Common myeloid progenitor, CD34-positive (primary cell): ENCODE measurements at regions of chr6 and their contacts with region 1.

Region 1: GRCh38 chr6:157079771-157080170 is 243.5 kb downstream of the TMEM242 start:
- DNase-seq: peak in 2 of 3 donors; percentile 55 to 62
- H3K4me3 ChIP-seq: no peak overlapping the region
- H3K27ac ChIP-seq: peak overlapping the region; percentile 17 to 58
- H3K4me1 ChIP-seq: peaks cover 11 to 30% (median 14%) of the 10 kb centered on the region in 4 experiments
- H3K27me3 ChIP-seq: no peaks in the 10 kb centered on the region

Region 2: DNA sequence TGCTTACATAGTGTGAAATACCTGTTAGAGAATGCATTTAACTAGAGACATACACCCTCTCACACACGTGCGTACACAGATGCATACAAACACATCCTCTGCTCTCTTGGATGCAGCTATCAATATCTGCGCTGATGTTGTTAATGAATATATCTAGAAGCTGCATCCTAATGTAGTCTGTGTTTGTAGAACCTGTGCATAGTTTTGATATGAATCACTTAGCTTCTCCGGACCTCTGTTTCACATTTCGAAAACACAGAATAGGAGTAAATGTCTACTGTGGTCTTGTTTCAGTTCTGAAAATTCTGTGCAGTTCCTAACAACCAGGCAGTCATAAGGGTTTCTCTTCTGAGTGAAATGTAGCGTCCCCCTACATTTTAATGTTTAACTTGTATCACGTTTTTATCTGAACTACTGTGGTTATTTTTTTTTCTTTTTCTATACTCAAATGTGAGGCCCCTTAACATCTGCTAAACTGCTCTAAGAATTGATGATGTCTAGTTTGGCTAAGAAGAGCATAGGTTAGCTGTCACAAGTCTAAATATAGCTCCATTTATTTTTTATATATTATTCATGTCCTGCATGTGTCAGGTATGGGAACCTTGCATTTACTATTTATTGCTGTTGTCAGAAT is 11.0 kb before region 1 on chr6:
- CTCF ChIA-PET with region 1: interaction called, 11 read pairs
- POLR2A ChIA-PET with region 1: no interaction called
- DNase-seq: no peak
- H3K4me3 ChIP-seq: no peak overlapping the region
- H3K27ac ChIP-seq: no peak overlapping the region
- H3K4me1 ChIP-seq: peaks cover 26 to 56% (median 39%) of the 10 kb centered on the region in 4 experiments
- H3K27me3 ChIP-seq: no peaks in the 10 kb centered on the region

Region 3: DNA sequence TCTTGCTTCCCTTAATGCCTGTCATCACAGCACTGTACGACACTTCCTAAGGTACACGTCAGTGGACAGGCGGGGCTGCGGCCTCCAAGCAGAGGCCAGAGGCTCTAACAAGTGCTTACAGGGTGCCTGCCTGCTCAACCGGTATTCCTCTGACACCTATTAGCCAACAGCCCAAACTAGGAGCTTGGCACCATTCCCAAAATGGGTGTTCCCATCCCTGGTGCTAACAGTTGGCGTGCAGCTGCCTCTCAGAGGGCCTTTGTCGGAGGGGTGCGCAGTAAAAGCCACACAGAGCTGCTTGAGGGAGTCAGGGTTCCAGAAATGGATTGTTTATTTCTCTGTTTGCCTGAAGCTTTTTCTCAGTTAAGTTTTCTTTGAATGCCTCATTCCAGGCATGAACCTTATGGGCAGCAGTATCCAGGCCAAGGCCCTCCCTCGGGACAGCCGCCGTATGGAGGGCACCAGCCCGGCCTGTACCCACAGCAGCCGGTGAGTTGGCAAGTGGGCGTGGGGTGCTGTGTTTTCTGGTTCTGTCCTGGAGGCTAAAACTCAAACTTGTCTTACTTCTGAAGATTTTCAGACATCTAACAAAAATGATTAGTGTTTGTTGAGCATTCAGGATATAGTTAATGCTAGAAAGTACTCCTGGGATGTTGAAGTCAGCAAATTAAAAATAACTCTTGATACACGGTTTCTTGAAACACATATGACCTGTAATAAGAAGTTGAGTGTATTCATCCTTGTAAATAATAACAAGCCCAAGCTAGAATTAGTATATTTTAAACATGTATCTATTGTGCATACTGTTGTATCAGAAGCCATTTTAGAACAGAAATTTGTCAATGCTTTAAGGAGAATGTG is 118.9 kb after region 1 on chr6:
- CTCF ChIA-PET with region 1: no interaction called
- POLR2A ChIA-PET with region 1: no interaction called
- DNase-seq: no peak
- H3K4me3 ChIP-seq: no peak overlapping the region
- H3K27ac ChIP-seq: no peak overlapping the region
- H3K4me1 ChIP-seq: no peaks in the 10 kb centered on the region
- H3K27me3 ChIP-seq: no peaks in the 10 kb centered on the region

Region 4: GRCh38 chr6:157211603-157212455 is 132.1 kb after region 1 on chr6:
- CTCF ChIA-PET with region 1: no interaction called
- POLR2A ChIA-PET with region 1: no interaction called
- DNase-seq: no peak
- H3K4me3 ChIP-seq: no peak overlapping the region
- H3K27ac ChIP-seq: no peak overlapping the region
- H3K4me1 ChIP-seq: no peaks in the 10 kb centered on the region
- H3K27me3 ChIP-seq: no peaks in the 10 kb centered on the region